Naive thymus-derived CD4-positive, alpha-beta T cell (primary cell): ENCODE measurements at regions of chr16 and their contacts with region 1.

Region 1: DNA sequence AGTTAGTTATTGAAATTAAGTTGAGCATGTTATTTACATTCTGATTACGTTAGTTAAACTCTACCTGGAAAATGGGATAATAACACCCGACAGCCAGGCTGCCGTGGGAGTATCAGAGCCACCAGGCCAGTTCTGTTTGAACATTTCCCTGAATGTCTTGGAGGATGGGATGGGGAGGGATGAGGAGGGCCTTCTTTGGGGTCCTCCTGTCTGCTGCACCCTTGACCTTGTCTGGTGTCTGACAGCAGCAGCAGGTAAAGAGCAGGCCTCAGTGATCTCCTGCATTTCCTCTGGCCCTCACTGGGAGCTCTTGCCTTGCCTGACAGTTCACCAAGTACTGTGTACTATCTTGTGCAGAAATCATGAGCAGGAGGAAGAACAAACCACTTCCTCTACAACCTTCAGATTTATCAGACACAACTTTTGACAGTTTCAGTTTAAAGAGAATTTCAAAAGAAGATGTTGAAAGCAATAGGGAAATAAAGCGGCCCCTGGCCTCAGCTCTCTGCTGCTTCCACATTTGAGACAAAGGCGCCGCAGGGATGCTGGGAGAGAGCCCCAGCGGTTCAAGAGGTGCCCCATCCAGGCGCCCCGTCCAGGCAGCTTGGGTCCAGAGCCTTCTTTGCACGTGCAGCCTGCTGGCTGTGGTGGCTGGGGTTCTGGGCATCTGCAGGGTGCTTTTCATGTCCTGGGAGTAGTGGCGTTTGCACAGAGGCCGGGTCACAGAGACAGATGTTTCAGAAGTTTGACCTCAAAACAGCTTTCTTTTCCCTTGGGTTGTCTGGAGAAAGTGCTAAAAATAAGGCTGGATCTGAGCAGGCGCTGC is 25.3 kb downstream of the CMIP start:
- DNase-seq: peak in 7 of 9 donors; percentile 45 to 79 (median 74)
- ATAC-seq: peak; percentile 92
- H3K4me3 ChIP-seq: peak overlapping the region; percentile 52
- H3K4me3 Mint-ChIP-seq: peak overlapping the region; percentile 52 to 85 (median 78)
- H3K27ac ChIP-seq: peak overlapping the region; percentile 63
- H3K27ac Mint-ChIP-seq: peak overlapping the region; percentile 83 to 97 (median 91)
- H3K4me1 ChIP-seq: peaks cover 37 to 46% of the 10 kb centered on the region in 2 donors
- H3K4me1 Mint-ChIP-seq: peaks cover 58 to 91% (median 78%) of the 10 kb centered on the region in 7 donors
- H3K27me3 ChIP-seq: no peaks in the 10 kb centered on the region
- H3K27me3 Mint-ChIP-seq: no peaks in the 10 kb centered on the region

Region 2: GRCh38 chr16:81335669-81336068 is 134.3 kb before region 1 on chr16:
- CTCF ChIA-PET with region 1: no interaction called
- POLR2A ChIA-PET with region 1: no interaction called
- intact Hi-C with region 1: no loop called
- DNase-seq: peak in 1 of 9 donors; percentile 38
- ATAC-seq: no peak
- H3K4me3 ChIP-seq: no peak overlapping the region
- H3K4me3 Mint-ChIP-seq: no peak overlapping the region
- H3K27ac ChIP-seq: no peak overlapping the region
- H3K27ac Mint-ChIP-seq: no peak overlapping the region
- H3K4me1 ChIP-seq: no peaks in the 10 kb centered on the region
- H3K4me1 Mint-ChIP-seq: peaks cover 0 to 11% (median 7%) of the 10 kb centered on the region in 7 donors
- H3K27me3 ChIP-seq: no peaks in the 10 kb centered on the region
- H3K27me3 Mint-ChIP-seq: no peaks in the 10 kb centered on the region

Region 3: DNA sequence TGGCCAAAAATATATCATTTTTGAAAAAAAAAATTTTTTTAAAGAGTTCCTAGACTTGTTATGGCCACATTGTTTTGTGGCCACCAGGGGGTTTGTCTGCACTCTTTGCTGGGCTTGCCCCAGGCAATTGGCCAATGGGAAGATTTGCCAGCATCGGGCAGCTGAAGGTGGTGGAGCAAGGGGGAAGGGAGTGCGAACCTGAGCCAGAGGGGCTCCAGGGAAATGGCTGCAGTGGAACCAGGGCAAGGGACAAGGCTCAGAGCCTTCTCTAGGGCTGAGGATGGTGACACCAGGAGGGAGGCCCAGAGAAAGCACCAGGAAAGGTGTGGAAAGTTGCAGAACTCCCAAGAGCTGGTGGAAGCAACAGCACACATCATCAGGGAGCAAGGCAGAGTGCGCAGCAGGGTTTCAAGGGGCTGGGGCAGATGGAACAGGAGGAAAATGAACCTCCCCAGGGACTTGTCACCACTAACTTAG is 40.8 kb before region 1 on chr16:
- CTCF ChIA-PET with region 1: interaction called, 4 read pairs
- POLR2A ChIA-PET with region 1: interaction called, 3 read pairs
- intact Hi-C with region 1: loop called in 1 of 2 experiments (anchors 1 kb)
- DNase-seq: no peak
- ATAC-seq: peak; percentile 59
- H3K4me3 ChIP-seq: no peak overlapping the region
- H3K4me3 Mint-ChIP-seq: no peak overlapping the region
- H3K27ac ChIP-seq: no peak overlapping the region
- H3K27ac Mint-ChIP-seq: peak overlapping the region in 2 of 9 donors; percentile 37 to 65
- H3K4me1 ChIP-seq: peaks cover 4 to 5% of the 10 kb centered on the region in 2 donors
- H3K4me1 Mint-ChIP-seq: peaks cover 15 to 19% (median 17%) of the 10 kb centered on the region in 7 donors
- H3K27me3 ChIP-seq: no peaks in the 10 kb centered on the region
- H3K27me3 Mint-ChIP-seq: peaks cover 0 to 11% (median 0%) of the 10 kb centered on the region in 5 donors

Region 4: GRCh38 chr16:81444448-81445121 is 25.3 kb before region 1 on chr16 and contains the start of gene CMIP:
- CTCF ChIA-PET with region 1: no interaction called
- POLR2A ChIA-PET with region 1: interaction called, 9 read pairs
- intact Hi-C with region 1: loop called (anchors 1 kb)
- DNase-seq: peak; percentile 66 to 89 (median 79)
- ATAC-seq: peak; percentile 88
- H3K4me3 ChIP-seq: peak within 1 kb of the TSS; percentile 91
- H3K4me3 Mint-ChIP-seq: peak within 1 kb of the TSS; percentile 85 to 94 (median 90)
- H3K27ac ChIP-seq: peak within 1 kb of the TSS; percentile 77
- H3K27ac Mint-ChIP-seq: peak within 1 kb of the TSS; percentile 90 to 97 (median 94)
- H3K4me1 ChIP-seq: peaks cover 35 to 37% of the 10 kb centered on the region in 2 donors
- H3K4me1 Mint-ChIP-seq: peaks cover 26 to 54% (median 48%) of the 10 kb centered on the region in 7 donors
- H3K27me3 ChIP-seq: no peaks in the 10 kb centered on the region
- H3K27me3 Mint-ChIP-seq: peaks cover 0 to 41% (median 0%) of the 10 kb centered on the region in 5 donors
- total RNA-seq, gene CMIP: 28.9 to 75.4 (median 38.2) TPM

Region 5: GRCh38 chr16:81451753-81452680 is 17.9 kb before region 1 on chr16:
- CTCF ChIA-PET with region 1: interaction called, 6 read pairs
- POLR2A ChIA-PET with region 1: interaction called, 4 read pairs
- intact Hi-C with region 1: loop called in 1 of 2 experiments (anchors 1 kb)
- DNase-seq: peak in 8 of 9 donors; percentile 36 to 71 (median 66)
- ATAC-seq: peak; percentile 91
- H3K4me3 ChIP-seq: peak overlapping the region; percentile 6
- H3K4me3 Mint-ChIP-seq: peak overlapping the region; percentile 68 to 85 (median 79)
- H3K27ac ChIP-seq: peak overlapping the region; percentile 33
- H3K27ac Mint-ChIP-seq: peak overlapping the region; percentile 82 to 94 (median 90)
- H3K4me1 ChIP-seq: peaks cover 19 to 45% of the 10 kb centered on the region in 2 donors
- H3K4me1 Mint-ChIP-seq: peaks cover 52 to 90% (median 76%) of the 10 kb centered on the region in 7 donors
- H3K27me3 ChIP-seq: no peaks in the 10 kb centered on the region
- H3K27me3 Mint-ChIP-seq: no peaks in the 10 kb centered on the region

Region 6: GRCh38 chr16:81521151-81521626 is 51.3 kb after region 1 on chr16:
- CTCF ChIA-PET with region 1: no interaction called
- POLR2A ChIA-PET with region 1: no interaction called
- intact Hi-C with region 1: loop called (anchors 1 to 5 kb)
- DNase-seq: peak; percentile 34 to 79 (median 65)
- ATAC-seq: peak; percentile 70
- H3K4me3 ChIP-seq: no peak overlapping the region
- H3K4me3 Mint-ChIP-seq: peak overlapping the region in 1 of 10 donors; percentile 48
- H3K27ac ChIP-seq: no peak overlapping the region
- H3K27ac Mint-ChIP-seq: peak overlapping the region; percentile 43 to 90 (median 68)
- H3K4me1 ChIP-seq: peaks cover 7 to 52% of the 10 kb centered on the region in 2 donors
- H3K4me1 Mint-ChIP-seq: peaks cover 14 to 61% (median 25%) of the 10 kb centered on the region in 7 donors
- H3K27me3 ChIP-seq: no peaks in the 10 kb centered on the region
- H3K27me3 Mint-ChIP-seq: no peaks in the 10 kb centered on the region

Region 7: GRCh38 chr16:81723098-81723723 is 253.3 kb after region 1 on chr16:
- CTCF ChIA-PET with region 1: interaction called, 3 read pairs
- POLR2A ChIA-PET with region 1: no interaction called
- intact Hi-C with region 1: loop called in 1 of 2 experiments (anchors 5 kb)
- DNase-seq: peak in 7 of 9 donors; percentile 51 to 72 (median 69)
- ATAC-seq: peak; percentile 86
- H3K4me3 ChIP-seq: no peak overlapping the region
- H3K4me3 Mint-ChIP-seq: no peak overlapping the region
- H3K27ac ChIP-seq: no peak overlapping the region
- H3K27ac Mint-ChIP-seq: peak overlapping the region in 2 of 9 donors; percentile 19 to 67
- H3K4me1 ChIP-seq: no peaks in the 10 kb centered on the region
- H3K4me1 Mint-ChIP-seq: peaks cover 6 to 21% (median 12%) of the 10 kb centered on the region in 7 donors
- H3K27me3 ChIP-seq: no peaks in the 10 kb centered on the region
- H3K27me3 Mint-ChIP-seq: peaks cover 0 to 4% (median 0%) of the 10 kb centered on the region in 5 donors

Region 8: DNA sequence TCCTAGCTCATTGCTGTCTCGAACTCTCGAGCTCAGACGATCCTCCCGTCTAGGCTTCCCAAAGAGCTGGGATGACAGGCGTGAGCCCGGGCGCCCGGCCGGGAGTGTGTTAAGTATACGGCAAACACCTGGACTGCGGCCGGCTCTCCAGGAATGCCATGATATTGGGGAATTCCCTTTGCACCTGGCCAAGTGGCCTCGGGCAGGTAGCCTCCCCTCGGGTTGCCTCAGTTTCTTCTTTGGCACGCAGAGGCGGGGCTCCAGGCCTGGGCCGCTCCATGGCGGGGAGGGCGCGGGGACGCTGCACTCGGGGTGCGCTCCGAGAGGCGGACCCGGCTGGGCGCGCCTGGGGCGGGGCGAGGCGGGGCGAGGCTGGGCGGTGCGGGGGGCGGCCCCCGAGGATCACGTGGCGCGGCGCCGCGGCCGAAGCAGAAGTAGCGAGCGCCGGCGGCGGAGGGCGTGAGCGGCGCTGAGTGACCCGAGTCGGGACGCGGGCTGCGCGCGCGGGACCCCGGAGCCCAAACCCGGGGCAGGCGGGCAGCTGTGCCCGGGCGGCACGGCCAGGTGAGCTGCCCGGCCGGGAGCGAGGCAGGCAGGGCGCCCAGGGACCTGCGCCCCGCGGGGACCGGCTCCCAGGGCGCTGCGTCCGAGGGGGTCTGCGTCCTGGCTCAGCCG is 309.1 kb after region 1 on chr16 and contains the start of gene PLCG2:
- CTCF ChIA-PET with region 1: no interaction called
- POLR2A ChIA-PET with region 1: no interaction called
- intact Hi-C with region 1: no loop called
- DNase-seq: peak in 7 of 9 donors; percentile 11 to 87 (median 24)
- ATAC-seq: peak; percentile 97
- H3K4me3 ChIP-seq: peak within 1 kb of the TSS; percentile 37
- H3K4me3 Mint-ChIP-seq: peak within 1 kb of the TSS; percentile 72 to 92 (median 82)
- H3K27ac ChIP-seq: no peak within 1 kb of the TSS
- H3K27ac Mint-ChIP-seq: peak within 1 kb of the TSS in 1 of 9 donors; percentile 72
- H3K4me1 ChIP-seq: peaks cover 4 to 8% of the 10 kb centered on the region in 2 donors
- H3K4me1 Mint-ChIP-seq: peaks cover 0 to 23% (median 21%) of the 10 kb centered on the region in 7 donors
- H3K27me3 ChIP-seq: peaks cover 0 to 3% of the 10 kb centered on the region in 2 donors
- H3K27me3 Mint-ChIP-seq: peaks cover 33 to 63% (median 44%) of the 10 kb centered on the region in 5 donors
- total RNA-seq, gene PLCG2: 1.4 to 85.8 (median 5.9) TPM